Naive thymus-derived CD4-positive, alpha-beta T cell (primary cell): ENCODE measurements at regions of chr11 and their contacts with region 1.

Region 1: GRCh38 chr11:13668102-13668956 is at the start of gene FAR1:
- DNase-seq: peak; percentile 89 to 97 (median 96)
- ATAC-seq: peak; percentile 94
- H3K4me3 ChIP-seq: peak within 1 kb of the TSS; percentile 90
- H3K4me3 Mint-ChIP-seq: peak within 1 kb of the TSS; percentile 90 to 100 (median 97)
- H3K27ac ChIP-seq: peak within 1 kb of the TSS; percentile 69
- H3K27ac Mint-ChIP-seq: peak within 1 kb of the TSS; percentile 69 to 99 (median 93)
- H3K4me1 ChIP-seq: peaks cover 14 to 17% of the 10 kb centered on the region in 2 donors
- H3K4me1 Mint-ChIP-seq: peaks cover 37 to 48% (median 45%) of the 10 kb centered on the region in 7 donors
- H3K27me3 ChIP-seq: no peaks in the 10 kb centered on the region
- H3K27me3 Mint-ChIP-seq: peaks cover 0 to 21% (median 7%) of the 10 kb centered on the region in 5 donors
- total RNA-seq, gene FAR1: 31.4 to 53.7 (median 33.8) TPM

Region 2: GRCh38 chr11:12397931-12398334 is 1270.4 kb before region 1 on chr11:
- CTCF ChIA-PET with region 1: no interaction called
- POLR2A ChIA-PET with region 1: no interaction called
- intact Hi-C with region 1: no loop called
- DNase-seq: no peak
- ATAC-seq: no peak
- H3K4me3 ChIP-seq: no peak overlapping the region
- H3K4me3 Mint-ChIP-seq: peak overlapping the region in 1 of 10 donors; percentile 29
- H3K27ac ChIP-seq: no peak overlapping the region
- H3K27ac Mint-ChIP-seq: no peak overlapping the region
- H3K4me1 ChIP-seq: no peaks in the 10 kb centered on the region
- H3K4me1 Mint-ChIP-seq: peaks cover 0 to 25% (median 17%) of the 10 kb centered on the region in 7 donors
- H3K27me3 ChIP-seq: no peaks in the 10 kb centered on the region
- H3K27me3 Mint-ChIP-seq: peaks cover 0 to 9% (median 0%) of the 10 kb centered on the region in 5 donors

Region 3: GRCh38 chr11:13276832-13277767 is 391.2 kb before region 1 on chr11:
- CTCF ChIA-PET with region 1: no interaction called
- POLR2A ChIA-PET with region 1: no interaction called
- intact Hi-C with region 1: loop called (anchors 1 kb)
- DNase-seq: peak; percentile 93 to 97 (median 96)
- ATAC-seq: peak; percentile 91
- H3K4me3 ChIP-seq: peak overlapping the region; percentile 80
- H3K4me3 Mint-ChIP-seq: peak overlapping the region; percentile 95 to 99 (median 97)
- H3K27ac ChIP-seq: peak overlapping the region; percentile 81
- H3K27ac Mint-ChIP-seq: peak overlapping the region; percentile 72 to 97 (median 91)
- H3K4me1 ChIP-seq: peaks cover 19 to 29% of the 10 kb centered on the region in 2 donors
- H3K4me1 Mint-ChIP-seq: peaks cover 32 to 47% (median 40%) of the 10 kb centered on the region in 7 donors
- H3K27me3 ChIP-seq: no peaks in the 10 kb centered on the region
- H3K27me3 Mint-ChIP-seq: peaks cover 0 to 51% (median 0%) of the 10 kb centered on the region in 5 donors

Region 4: GRCh38 chr11:13486926-13487660 is 181.2 kb before region 1 on chr11:
- CTCF ChIA-PET with region 1: no interaction called
- POLR2A ChIA-PET with region 1: no interaction called
- intact Hi-C with region 1: loop called (anchors 1 to 2 kb)
- DNase-seq: peak; percentile 28 to 64 (median 55)
- ATAC-seq: peak; percentile 92
- H3K4me3 ChIP-seq: peak overlapping the region; percentile 61
- H3K4me3 Mint-ChIP-seq: peak overlapping the region; percentile 66 to 90 (median 76)
- H3K27ac ChIP-seq: no peak overlapping the region
- H3K27ac Mint-ChIP-seq: peak overlapping the region in 6 of 9 donors; percentile 40 to 77 (median 74)
- H3K4me1 ChIP-seq: peaks cover 0 to 4% of the 10 kb centered on the region in 2 donors
- H3K4me1 Mint-ChIP-seq: peaks cover 5 to 7% (median 6%) of the 10 kb centered on the region in 7 donors
- H3K27me3 ChIP-seq: no peaks in the 10 kb centered on the region
- H3K27me3 Mint-ChIP-seq: peaks cover 2 to 12% (median 4%) of the 10 kb centered on the region in 5 donors

Region 5: DNA sequence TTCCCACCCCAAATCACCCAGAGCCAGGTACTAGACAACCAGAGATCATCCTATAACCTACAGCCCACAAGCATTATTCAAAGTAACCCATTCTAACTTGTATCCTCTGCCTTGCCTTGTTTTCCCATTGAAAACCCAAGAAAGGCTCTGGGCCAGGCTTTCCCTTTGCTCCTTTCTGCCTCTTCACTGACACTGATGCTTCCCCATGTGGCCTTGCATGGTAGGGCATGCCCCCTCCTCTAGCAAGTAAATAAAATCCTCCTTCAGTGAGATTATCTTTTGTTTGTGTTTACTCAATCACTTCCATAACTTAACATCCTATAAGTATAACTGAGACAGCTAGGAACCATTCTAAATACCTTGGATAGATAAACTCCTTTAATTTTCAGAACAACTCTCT is 65.5 kb before region 1 on chr11:
- CTCF ChIA-PET with region 1: no interaction called
- POLR2A ChIA-PET with region 1: no interaction called
- intact Hi-C with region 1: no loop called
- DNase-seq: no peak
- ATAC-seq: no peak
- H3K4me3 ChIP-seq: no peak overlapping the region
- H3K4me3 Mint-ChIP-seq: no peak overlapping the region
- H3K27ac ChIP-seq: no peak overlapping the region
- H3K27ac Mint-ChIP-seq: no peak overlapping the region
- H3K4me1 ChIP-seq: no peaks in the 10 kb centered on the region
- H3K4me1 Mint-ChIP-seq: no peaks in the 10 kb centered on the region
- H3K27me3 ChIP-seq: no peaks in the 10 kb centered on the region
- H3K27me3 Mint-ChIP-seq: peaks cover 0 to 11% (median 5%) of the 10 kb centered on the region in 5 donors

Region 6: DNA sequence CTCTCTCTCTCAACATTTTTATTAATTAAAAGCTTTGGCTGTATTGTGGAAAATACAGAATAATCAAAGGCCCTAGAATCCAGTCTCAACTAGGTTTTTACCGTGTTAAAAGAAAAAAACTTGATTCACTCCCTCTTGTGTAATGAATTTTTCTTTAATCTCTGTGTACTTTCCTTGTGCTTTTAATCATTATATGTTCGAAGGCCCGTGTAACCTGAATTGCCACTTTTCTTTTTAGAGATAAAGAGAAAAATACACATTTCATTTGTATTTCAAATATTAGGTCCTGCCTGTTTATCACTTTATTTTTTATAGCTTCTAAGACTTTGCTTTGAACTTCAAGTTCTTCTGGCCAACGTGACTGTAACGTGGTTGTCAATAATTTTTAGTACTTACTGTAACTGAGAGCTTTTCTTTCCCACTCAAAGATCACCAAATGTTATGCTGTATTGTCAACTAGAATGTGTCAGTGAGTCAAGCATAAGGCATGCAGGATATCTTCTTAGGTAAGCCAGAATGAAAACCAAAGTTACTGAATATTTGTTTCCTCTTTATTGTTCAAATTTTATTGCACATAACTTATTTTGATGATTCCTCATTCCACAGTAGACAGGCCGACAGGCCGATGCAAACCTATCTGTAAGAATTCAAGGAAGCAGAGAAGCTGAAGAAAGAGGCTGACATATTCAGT is 23.2 kb before region 1 on chr11:
- CTCF ChIA-PET with region 1: no interaction called
- POLR2A ChIA-PET with region 1: no interaction called
- intact Hi-C with region 1: no loop called
- DNase-seq: no peak
- ATAC-seq: no peak
- H3K4me3 ChIP-seq: no peak overlapping the region
- H3K4me3 Mint-ChIP-seq: no peak overlapping the region
- H3K27ac ChIP-seq: no peak overlapping the region
- H3K27ac Mint-ChIP-seq: no peak overlapping the region
- H3K4me1 ChIP-seq: no peaks in the 10 kb centered on the region
- H3K4me1 Mint-ChIP-seq: no peaks in the 10 kb centered on the region
- H3K27me3 ChIP-seq: no peaks in the 10 kb centered on the region
- H3K27me3 Mint-ChIP-seq: peaks cover 15 to 32% (median 29%) of the 10 kb centered on the region in 5 donors

Region 7: DNA sequence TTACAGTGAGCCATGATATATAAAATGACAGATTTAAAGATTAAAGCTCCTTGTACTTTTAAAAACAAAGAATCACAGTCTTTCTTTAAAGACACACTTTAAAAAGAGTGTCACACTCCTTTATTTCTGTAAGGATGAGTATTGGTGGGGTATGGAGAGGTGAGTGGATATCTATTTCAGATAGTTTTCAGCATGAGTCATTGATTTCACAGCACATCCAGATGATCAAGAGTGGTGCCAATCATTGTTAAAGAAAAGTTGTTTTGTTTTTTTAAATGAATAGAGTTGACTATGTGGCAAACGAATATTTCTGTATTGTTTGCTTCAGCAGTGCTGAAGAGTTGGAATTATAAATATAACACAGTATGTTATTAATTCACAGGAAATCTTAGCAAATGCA is 52.6 kb after region 1 on chr11:
- CTCF ChIA-PET with region 1: no interaction called
- POLR2A ChIA-PET with region 1: no interaction called
- intact Hi-C with region 1: no loop called
- DNase-seq: no peak
- ATAC-seq: no peak
- H3K4me3 ChIP-seq: no peak overlapping the region
- H3K4me3 Mint-ChIP-seq: no peak overlapping the region
- H3K27ac ChIP-seq: no peak overlapping the region
- H3K27ac Mint-ChIP-seq: no peak overlapping the region
- H3K4me1 ChIP-seq: no peaks in the 10 kb centered on the region
- H3K4me1 Mint-ChIP-seq: peaks cover 0 to 5% (median 0%) of the 10 kb centered on the region in 7 donors
- H3K27me3 ChIP-seq: no peaks in the 10 kb centered on the region
- H3K27me3 Mint-ChIP-seq: no peaks in the 10 kb centered on the region

Region 8: DNA sequence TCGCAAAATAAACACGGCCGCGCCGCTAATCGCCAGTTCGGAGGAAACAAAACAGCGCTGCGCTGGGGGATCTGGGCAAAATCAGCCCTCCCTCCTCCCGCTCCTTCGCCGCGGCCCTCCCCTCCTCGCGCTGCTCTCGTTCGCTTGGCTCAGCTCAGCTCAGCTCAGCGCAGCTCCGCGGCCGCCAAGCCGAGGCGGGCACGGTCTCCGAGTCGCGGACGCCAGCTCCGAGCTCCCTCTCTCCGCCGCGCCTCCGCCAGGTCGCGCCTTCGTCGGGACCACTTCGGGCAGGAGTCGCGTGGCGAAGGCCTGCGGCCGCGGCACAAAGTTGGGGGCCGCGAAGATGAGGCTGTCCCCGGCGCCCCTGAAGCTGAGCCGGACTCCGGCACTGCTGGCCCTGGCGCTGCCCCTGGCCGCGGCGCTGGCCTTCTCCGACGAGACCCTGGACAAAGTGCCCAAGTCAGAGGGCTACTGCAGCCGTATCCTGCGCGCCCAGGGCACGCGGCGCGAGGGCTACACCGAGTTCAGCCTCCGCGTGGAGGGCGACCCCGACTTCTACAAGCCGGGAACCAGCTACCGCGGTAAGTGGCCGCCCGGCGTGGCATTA is 294.3 kb after region 1 on chr11 and contains the start of gene SPON1:
- CTCF ChIA-PET with region 1: no interaction called
- POLR2A ChIA-PET with region 1: no interaction called
- intact Hi-C with region 1: loop called in 1 of 2 experiments (anchors 10 kb)
- DNase-seq: peak in 7 of 9 donors; percentile 34 to 57 (median 42)
- ATAC-seq: peak; percentile 81
- H3K4me3 ChIP-seq: peak within 1 kb of the TSS; percentile 34
- H3K4me3 Mint-ChIP-seq: peak within 1 kb of the TSS; percentile 68 to 86 (median 77)
- H3K27ac ChIP-seq: no peak within 1 kb of the TSS
- H3K27ac Mint-ChIP-seq: peak within 1 kb of the TSS in 1 of 9 donors; percentile 55
- H3K4me1 ChIP-seq: peaks cover 10 to 16% of the 10 kb centered on the region in 2 donors
- H3K4me1 Mint-ChIP-seq: peaks cover 4 to 18% (median 13%) of the 10 kb centered on the region in 7 donors
- H3K27me3 ChIP-seq: peaks cover 6 to 21% of the 10 kb centered on the region in 2 donors
- H3K27me3 Mint-ChIP-seq: peaks cover 55 to 88% (median 62%) of the 10 kb centered on the region in 5 donors
- total RNA-seq, gene SPON1: 1.6 to 20.8 (median 3.9) TPM

Region 9: GRCh38 chr11:14249121-14249963 is 581.0 kb after region 1 on chr11:
- CTCF ChIA-PET with region 1: no interaction called
- POLR2A ChIA-PET with region 1: no interaction called
- intact Hi-C with region 1: loop called in 1 of 2 experiments (anchors 1 kb)
- DNase-seq: peak; percentile 42 to 77 (median 62)
- ATAC-seq: peak; percentile 75
- H3K4me3 ChIP-seq: peak overlapping the region; percentile 31
- H3K4me3 Mint-ChIP-seq: peak overlapping the region; percentile 46 to 77 (median 72)
- H3K27ac ChIP-seq: no peak overlapping the region
- H3K27ac Mint-ChIP-seq: peak overlapping the region in 2 of 9 donors; percentile 71 to 80
- H3K4me1 ChIP-seq: peaks cover 12 to 13% of the 10 kb centered on the region in 2 donors
- H3K4me1 Mint-ChIP-seq: peaks cover 13 to 28% (median 24%) of the 10 kb centered on the region in 7 donors
- H3K27me3 ChIP-seq: no peaks in the 10 kb centered on the region
- H3K27me3 Mint-ChIP-seq: peaks cover 0 to 22% (median 0%) of the 10 kb centered on the region in 5 donors

Region 10: GRCh38 chr11:14519917-14520746 is 851.8 kb after region 1 on chr11 and contains the start of gene PSMA1:
- CTCF ChIA-PET with region 1: no interaction called
- POLR2A ChIA-PET with region 1: no interaction called
- intact Hi-C with region 1: loop called in 1 of 2 experiments (anchors 1 kb)
- DNase-seq: peak; percentile 72 to 95 (median 89)
- ATAC-seq: peak; percentile 96
- H3K4me3 ChIP-seq: peak within 1 kb of the TSS; percentile 70
- H3K4me3 Mint-ChIP-seq: peak within 1 kb of the TSS; percentile 86 to 99 (median 97)
- H3K27ac ChIP-seq: peak within 1 kb of the TSS; percentile 96
- H3K27ac Mint-ChIP-seq: peak within 1 kb of the TSS; percentile 93 to 99 (median 96)
- H3K4me1 ChIP-seq: peaks cover 14 to 16% of the 10 kb centered on the region in 2 donors
- H3K4me1 Mint-ChIP-seq: peaks cover 15 to 43% (median 38%) of the 10 kb centered on the region in 7 donors
- H3K27me3 ChIP-seq: no peaks in the 10 kb centered on the region
- H3K27me3 Mint-ChIP-seq: no peaks in the 10 kb centered on the region
- total RNA-seq, gene PSMA1: 103 to 253 (median 120) TPM

Region 11: DNA sequence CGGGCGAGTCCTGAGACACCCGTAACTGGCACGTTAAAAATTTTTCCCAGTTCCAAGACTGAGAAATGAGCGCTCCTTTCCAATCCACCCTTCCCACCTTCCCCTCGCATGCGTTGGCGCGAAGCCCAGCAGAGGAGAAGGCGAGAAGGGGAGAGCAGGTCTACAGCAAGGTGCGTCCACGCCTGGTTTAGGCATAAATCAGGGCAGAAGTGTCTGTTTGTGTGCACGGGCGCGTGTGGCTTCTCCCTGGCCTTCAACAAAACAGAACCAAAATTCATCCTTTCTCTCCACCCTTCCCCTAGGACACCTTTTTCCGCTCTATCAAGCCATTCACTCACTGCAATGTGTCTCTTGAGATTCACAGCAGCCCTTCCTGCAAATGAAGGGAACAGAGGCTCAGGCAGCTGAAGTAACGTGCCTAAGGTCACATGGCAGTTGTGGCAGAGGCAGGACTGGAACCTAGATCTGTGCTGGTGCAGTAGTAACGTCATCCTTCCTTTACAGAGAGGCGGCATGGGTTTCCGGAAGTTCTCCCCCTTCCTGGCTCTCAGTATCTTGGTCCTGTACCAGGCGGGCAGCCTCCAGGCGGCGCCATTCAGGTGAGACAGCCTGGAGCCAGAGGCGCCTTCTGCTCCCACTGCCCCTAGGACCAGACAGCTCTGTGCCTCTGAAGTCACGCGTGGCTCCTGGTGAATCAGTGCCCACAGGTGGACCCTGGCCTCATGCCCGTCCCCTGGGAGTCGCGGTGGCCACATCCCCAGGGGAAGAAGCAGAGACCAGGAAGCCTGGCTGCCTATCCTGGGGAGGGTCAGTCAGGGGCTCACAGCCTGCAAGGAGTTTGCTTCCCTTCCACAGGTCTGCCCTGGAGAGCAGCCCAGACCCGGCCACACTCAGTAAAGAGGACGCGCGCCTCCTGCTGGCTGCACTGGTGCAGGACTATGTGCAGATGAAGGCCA is 1406.2 kb after region 1 on chr11:
- CTCF ChIA-PET with region 1: no interaction called
- POLR2A ChIA-PET with region 1: no interaction called
- intact Hi-C with region 1: loop called in 1 of 2 experiments (anchors 10 kb)
- DNase-seq: peak; percentile 66 to 86 (median 75)
- ATAC-seq: peak; percentile 88
- H3K4me3 ChIP-seq: peak overlapping the region; percentile 41
- H3K4me3 Mint-ChIP-seq: peak overlapping the region; percentile 76 to 95 (median 86)
- H3K27ac ChIP-seq: no peak overlapping the region
- H3K27ac Mint-ChIP-seq: peak overlapping the region in 4 of 9 donors; percentile 29 to 86 (median 56)
- H3K4me1 ChIP-seq: peaks cover 6 to 14% of the 10 kb centered on the region in 2 donors
- H3K4me1 Mint-ChIP-seq: peaks cover 12 to 23% (median 17%) of the 10 kb centered on the region in 7 donors
- H3K27me3 ChIP-seq: peaks cover 4% of the 10 kb centered on the region in 2 donors
- H3K27me3 Mint-ChIP-seq: peaks cover 9 to 47% (median 14%) of the 10 kb centered on the region in 5 donors